Esophagus muscularis mucosa (tissue), 4 donors: ENCODE measurements at regions of chr21 and their contacts with region 1.

Region 1: DNA sequence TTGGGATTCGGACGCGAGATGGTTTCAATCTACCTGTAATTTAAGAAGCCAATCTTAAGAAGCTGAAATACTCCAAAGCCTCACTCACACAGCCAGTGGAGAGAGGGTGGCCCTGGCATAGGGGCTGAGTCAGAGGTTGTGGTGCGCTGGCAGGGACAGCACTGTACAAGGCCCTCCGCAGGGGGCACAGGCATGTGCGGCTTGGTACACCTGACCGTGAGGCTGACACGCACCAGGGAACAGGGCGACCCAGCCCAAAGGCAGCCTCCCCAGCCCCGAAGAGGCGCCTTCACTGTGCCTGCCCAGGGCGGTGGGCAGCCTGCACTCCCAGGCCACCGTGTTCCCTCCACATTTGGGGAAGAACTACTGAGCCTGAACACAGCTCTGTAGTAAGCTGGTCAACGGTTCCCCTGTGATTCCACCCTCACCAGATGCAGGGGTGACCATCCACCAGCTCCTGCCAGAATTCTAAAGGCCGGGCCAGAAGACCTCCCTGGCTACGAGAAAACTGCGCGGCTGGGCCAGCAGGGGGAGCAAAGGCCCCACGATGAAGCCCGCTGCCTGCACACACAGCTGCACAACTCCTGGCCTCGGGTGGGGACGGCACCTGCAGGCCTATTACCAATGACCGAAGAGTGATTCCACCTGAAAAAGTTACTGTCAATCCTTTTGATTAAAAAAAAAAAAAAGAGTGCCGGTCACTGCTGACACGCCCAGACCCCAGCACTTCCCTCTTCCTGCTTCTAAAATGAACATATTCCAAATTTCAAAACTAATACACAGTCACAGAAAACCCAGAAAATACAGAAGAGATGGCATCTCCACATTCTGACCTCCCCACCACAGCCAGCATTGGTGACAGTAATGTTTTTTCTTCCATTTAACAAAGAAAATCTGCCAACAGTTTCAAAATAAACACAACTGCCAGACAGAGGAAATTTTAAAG is 49.6 kb upstream of the RIPK4 start:
- DNase-seq: peak; percentile 94
- H3K4me3 ChIP-seq: no peak overlapping the region
- H3K27ac ChIP-seq: no peak overlapping the region
- H3K4me1 ChIP-seq: peaks cover 0 to 10% (median 4%) of the 10 kb centered on the region in 4 donors
- H3K27me3 ChIP-seq: no peaks in the 10 kb centered on the region
- CTCF ChIP-seq: peak; percentile 72 to 82 (median 75)
- EP300 ChIP-seq: no peak
- POLR2A ChIP-seq: no peak

Region 2: DNA sequence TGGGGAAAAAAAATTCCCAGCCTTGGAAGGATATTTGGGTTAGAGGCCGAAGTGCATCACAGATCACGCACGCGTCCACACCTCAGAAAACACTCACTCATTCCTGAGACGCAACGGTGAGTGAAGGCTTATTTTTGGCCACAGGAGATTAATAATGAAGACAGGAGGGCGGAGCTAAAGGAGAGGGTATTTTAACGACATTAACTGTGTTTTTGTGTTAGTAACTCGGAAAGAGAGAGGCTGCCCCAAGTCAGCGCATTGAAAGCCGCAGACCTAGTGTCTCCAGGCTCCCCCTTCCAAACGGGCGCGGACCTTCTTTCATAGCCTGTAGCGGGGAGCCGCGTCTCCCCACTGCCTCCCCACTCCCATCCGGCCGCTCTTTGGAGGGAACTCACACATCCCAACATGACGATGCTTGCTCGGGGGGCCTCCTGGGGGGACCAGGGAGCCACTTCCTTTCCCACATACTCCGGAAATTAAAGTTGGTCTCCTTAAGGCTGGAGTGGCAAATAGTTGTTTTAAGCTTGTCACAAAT is 48.5 kb before region 1 on chr21:
- intact Hi-C with region 1: no loop called
- DNase-seq: no peak
- H3K4me3 ChIP-seq: peak overlapping the region in 3 of 4 donors; percentile 10 to 43 (median 27)
- H3K27ac ChIP-seq: no peak overlapping the region
- H3K4me1 ChIP-seq: peaks cover 25 to 32% (median 30%) of the 10 kb centered on the region in 4 donors
- H3K27me3 ChIP-seq: peaks cover 14 to 99% (median 66%) of the 10 kb centered on the region in 4 donors
- CTCF ChIP-seq: no peak
- EP300 ChIP-seq: no peak
- POLR2A ChIP-seq: no peak

Region 3: GRCh38 chr21:41777951-41778874 is 38.3 kb before region 1 on chr21:
- intact Hi-C with region 1: loop called (anchors 5 kb)
- DNase-seq: peak; percentile 97
- H3K4me3 ChIP-seq: peak overlapping the region in 1 of 4 donors; percentile 0
- H3K27ac ChIP-seq: no peak overlapping the region
- H3K4me1 ChIP-seq: peaks cover 8 to 15% (median 11%) of the 10 kb centered on the region in 4 donors
- H3K27me3 ChIP-seq: peaks cover 0 to 87% (median 20%) of the 10 kb centered on the region in 4 donors
- CTCF ChIP-seq: peak; percentile 90 to 99 (median 90)
- EP300 ChIP-seq: no peak
- POLR2A ChIP-seq: no peak

Region 4: GRCh38 chr21:41851090-41851780 is 34.7 kb after region 1 on chr21:
- intact Hi-C with region 1: no loop called
- DNase-seq: no peak
- H3K4me3 ChIP-seq: no peak overlapping the region
- H3K27ac ChIP-seq: no peak overlapping the region
- H3K4me1 ChIP-seq: no peaks in the 10 kb centered on the region
- H3K27me3 ChIP-seq: no peaks in the 10 kb centered on the region
- CTCF ChIP-seq: no peak
- EP300 ChIP-seq: no peak
- POLR2A ChIP-seq: no peak

Region 5: DNA sequence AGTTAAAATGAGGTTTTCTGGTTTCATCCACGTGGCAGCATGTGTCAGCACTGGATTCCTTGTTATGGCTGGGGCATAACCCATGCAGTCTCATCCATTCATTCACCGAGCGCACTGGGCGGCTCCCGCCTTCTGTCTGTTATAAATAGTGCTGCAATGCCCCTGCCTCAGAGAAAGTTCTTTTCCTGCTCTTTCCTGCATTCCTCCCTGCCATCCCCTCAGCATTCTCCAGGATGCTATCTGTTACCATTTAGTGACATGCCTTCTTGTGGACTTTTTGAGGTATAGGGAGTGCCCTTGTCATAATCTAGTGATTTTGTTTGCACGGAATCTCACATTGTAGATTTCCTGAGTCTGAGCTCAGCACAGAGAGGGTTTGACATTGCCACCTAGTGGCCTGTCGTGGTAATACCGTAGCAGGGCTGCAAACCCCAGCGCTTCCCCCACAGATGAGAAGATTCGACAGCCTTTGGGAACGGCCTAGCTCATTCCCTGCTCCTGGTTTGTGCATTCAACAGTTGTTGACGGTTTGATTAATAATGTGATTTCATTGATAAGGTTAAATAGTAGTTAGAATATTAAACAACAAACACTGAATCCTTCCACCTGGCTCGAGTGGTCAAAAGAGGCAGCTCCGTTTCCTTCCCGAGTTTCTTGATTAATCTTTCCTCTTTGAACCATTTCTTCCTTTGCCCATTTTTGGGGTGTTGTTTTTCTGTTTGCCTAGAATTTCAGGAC is 300.9 kb after region 1 on chr21:
- intact Hi-C with region 1: loop called (anchors 2 kb)
- DNase-seq: no peak
- H3K4me3 ChIP-seq: peak overlapping the region in 1 of 4 donors; percentile 17
- H3K27ac ChIP-seq: no peak overlapping the region
- H3K4me1 ChIP-seq: peaks cover 8 to 19% (median 11%) of the 10 kb centered on the region in 4 donors
- H3K27me3 ChIP-seq: peaks cover 0 to 75% (median 9%) of the 10 kb centered on the region in 4 donors
- CTCF ChIP-seq: peak; percentile 92 to 99 (median 94)
- EP300 ChIP-seq: no peak
- POLR2A ChIP-seq: no peak